CD4-positive, alpha-beta T cell (primary cell): ENCODE measurements at regions of chr9 and their contacts with region 1.

Region 1: DNA sequence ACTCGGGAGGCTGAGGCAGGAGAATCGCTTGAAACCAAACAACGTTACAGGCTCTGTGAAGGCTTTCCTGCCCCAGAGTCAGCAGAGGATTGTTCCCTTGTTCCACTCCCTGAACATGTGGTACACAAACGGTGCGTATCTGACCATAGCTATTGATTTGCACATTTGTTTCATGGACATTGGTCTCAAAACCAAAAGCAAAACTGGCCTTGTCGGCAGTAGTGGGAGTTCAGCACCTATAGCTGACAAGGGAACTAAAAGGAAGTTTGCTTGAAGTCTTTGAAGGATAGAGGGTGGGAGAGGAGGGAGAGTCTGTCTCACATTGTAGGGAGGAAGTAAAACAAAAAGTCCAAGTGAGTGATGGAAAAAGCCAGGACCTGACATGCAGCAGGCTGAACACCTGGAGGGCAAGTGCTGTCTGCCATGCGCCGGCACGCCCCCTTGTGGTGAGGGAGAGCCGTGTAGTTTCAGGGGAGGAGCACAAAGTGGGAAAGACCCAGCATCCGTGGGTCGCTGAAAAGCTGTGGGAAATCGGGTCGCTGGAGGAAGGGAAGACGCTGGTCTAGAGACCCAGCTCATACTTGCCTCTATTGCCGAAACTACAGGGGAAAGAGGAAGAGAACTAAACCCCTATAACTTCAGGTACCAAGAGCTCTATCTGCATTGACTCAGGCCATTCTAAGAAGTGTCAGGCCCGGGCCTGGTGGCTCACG is 58.0 kb downstream of the RAD23B start:
- DNase-seq: peak; percentile 71 to 89 (median 80)
- ATAC-seq: peak; percentile 83
- H3K4me3 ChIP-seq: no peak overlapping the region
- H3K4me3 Mint-ChIP-seq: no peak overlapping the region
- H3K27ac ChIP-seq: no peak overlapping the region
- H3K27ac Mint-ChIP-seq: peak overlapping the region; percentile 33
- H3K4me1 ChIP-seq: peaks cover 8% of the 10 kb centered on the region
- H3K4me1 Mint-ChIP-seq: peaks cover 5% of the 10 kb centered on the region
- H3K27me3 ChIP-seq: no peaks in the 10 kb centered on the region
- H3K27me3 Mint-ChIP-seq: no peaks in the 10 kb centered on the region
- CTCF ChIP-seq: peak; percentile 95

Region 2: DNA sequence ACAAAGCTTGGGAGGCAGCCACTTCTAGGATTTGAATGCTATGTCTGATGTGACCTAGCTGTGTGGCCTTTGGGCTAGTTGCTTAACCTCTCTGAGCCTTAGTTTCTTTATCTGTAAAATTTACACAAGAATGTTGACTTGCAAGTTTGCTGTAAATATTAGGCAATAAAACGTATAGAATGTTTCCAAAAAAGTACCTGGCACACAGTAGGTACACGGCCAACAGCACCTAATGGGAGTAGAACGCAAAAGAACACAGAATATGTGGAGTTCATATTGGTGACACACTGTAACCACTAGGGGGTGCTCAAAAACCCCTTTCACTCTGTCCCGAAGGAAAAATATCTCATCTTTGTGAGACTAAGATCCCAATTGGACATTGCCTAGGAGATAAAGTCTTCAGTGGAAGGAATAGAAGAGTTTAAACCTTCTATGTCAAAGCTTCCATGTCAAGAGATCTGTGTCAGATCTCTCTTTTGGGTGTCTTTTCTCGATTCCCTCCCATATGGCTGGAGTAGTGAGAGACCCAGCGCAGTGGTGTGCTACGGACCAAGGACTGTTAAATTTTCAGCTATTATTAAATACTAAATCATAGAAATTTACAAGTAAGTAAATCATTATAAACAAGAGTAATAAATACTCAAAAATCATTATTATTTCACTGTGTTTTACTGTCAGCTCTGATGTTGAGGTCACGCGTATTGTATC is 203.4 kb before region 1 on chr9:
- CTCF ChIA-PET with region 1: no interaction called
- POLR2A ChIA-PET with region 1: no interaction called
- intact Hi-C with region 1: loop called (anchors 2 to 5 kb)
- DNase-seq: peak in 3 of 14 experiments; percentile 13 to 31 (median 16)
- ATAC-seq: no peak
- H3K4me3 ChIP-seq: no peak overlapping the region
- H3K4me3 Mint-ChIP-seq: no peak overlapping the region
- H3K27ac ChIP-seq: no peak overlapping the region
- H3K27ac Mint-ChIP-seq: no peak overlapping the region
- H3K4me1 ChIP-seq: no peaks in the 10 kb centered on the region
- H3K4me1 Mint-ChIP-seq: no peaks in the 10 kb centered on the region
- H3K27me3 ChIP-seq: no peaks in the 10 kb centered on the region
- H3K27me3 Mint-ChIP-seq: peaks cover 16% of the 10 kb centered on the region
- CTCF ChIP-seq: peak; percentile 60

Region 3: DNA sequence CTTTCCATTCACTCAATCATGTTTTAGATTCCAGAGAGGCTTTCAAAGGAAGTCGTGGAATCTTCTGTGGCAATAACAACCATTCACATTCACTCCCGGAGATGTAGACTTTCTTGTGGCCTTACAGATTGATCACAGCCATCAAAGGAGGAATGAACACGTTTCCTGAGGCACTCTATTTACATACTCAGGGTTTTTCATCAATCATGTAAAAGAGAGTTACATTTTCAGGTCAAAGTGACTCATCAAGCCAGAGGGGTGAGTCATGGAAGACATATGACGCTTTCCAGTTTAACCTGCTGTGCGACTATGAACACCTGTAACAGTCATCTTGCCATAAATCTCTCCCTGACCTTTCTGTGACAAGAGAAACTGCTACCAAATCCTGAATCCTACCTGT is 97.3 kb before region 1 on chr9:
- CTCF ChIA-PET with region 1: interaction called, 9 read pairs
- POLR2A ChIA-PET with region 1: interaction called, 3 read pairs
- intact Hi-C with region 1: loop called (anchors 1 kb)
- DNase-seq: peak in 5 of 14 experiments; percentile 4 to 37 (median 13)
- ATAC-seq: peak; percentile 56
- H3K4me3 ChIP-seq: no peak overlapping the region
- H3K4me3 Mint-ChIP-seq: no peak overlapping the region
- H3K27ac ChIP-seq: no peak overlapping the region
- H3K27ac Mint-ChIP-seq: no peak overlapping the region
- H3K4me1 ChIP-seq: peaks cover 6% of the 10 kb centered on the region
- H3K4me1 Mint-ChIP-seq: peaks cover 4% of the 10 kb centered on the region
- H3K27me3 ChIP-seq: no peaks in the 10 kb centered on the region
- H3K27me3 Mint-ChIP-seq: no peaks in the 10 kb centered on the region
- CTCF ChIP-seq: no peak

Region 4: GRCh38 chr9:107274953-107275422 is 66.1 kb before region 1 on chr9:
- CTCF ChIA-PET with region 1: interaction called, 5 read pairs
- POLR2A ChIA-PET with region 1: no interaction called
- intact Hi-C with region 1: loop called in 1 of 2 experiments (anchors 5 kb)
- DNase-seq: no peak
- ATAC-seq: no peak
- H3K4me3 ChIP-seq: no peak overlapping the region
- H3K4me3 Mint-ChIP-seq: no peak overlapping the region
- H3K27ac ChIP-seq: no peak overlapping the region
- H3K27ac Mint-ChIP-seq: no peak overlapping the region
- H3K4me1 ChIP-seq: no peaks in the 10 kb centered on the region
- H3K4me1 Mint-ChIP-seq: no peaks in the 10 kb centered on the region
- H3K27me3 ChIP-seq: peaks cover 2 to 9% of the 10 kb centered on the region in 2 experiments
- H3K27me3 Mint-ChIP-seq: peaks cover 38% of the 10 kb centered on the region
- CTCF ChIP-seq: no peak

Region 5: GRCh38 chr9:107999890-108000289 is 658.8 kb after region 1 on chr9:
- CTCF ChIA-PET with region 1: no interaction called
- POLR2A ChIA-PET with region 1: no interaction called
- intact Hi-C with region 1: no loop called
- DNase-seq: no peak
- ATAC-seq: no peak
- H3K4me3 ChIP-seq: no peak overlapping the region
- H3K4me3 Mint-ChIP-seq: no peak overlapping the region
- H3K27ac ChIP-seq: no peak overlapping the region
- H3K27ac Mint-ChIP-seq: no peak overlapping the region
- H3K4me1 ChIP-seq: no peaks in the 10 kb centered on the region
- H3K4me1 Mint-ChIP-seq: no peaks in the 10 kb centered on the region
- H3K27me3 ChIP-seq: no peaks in the 10 kb centered on the region
- H3K27me3 Mint-ChIP-seq: no peaks in the 10 kb centered on the region
- CTCF ChIP-seq: no peak